ENCODE measurements at regions of chr3 and their contacts with region 1.

Region 1: DNA sequence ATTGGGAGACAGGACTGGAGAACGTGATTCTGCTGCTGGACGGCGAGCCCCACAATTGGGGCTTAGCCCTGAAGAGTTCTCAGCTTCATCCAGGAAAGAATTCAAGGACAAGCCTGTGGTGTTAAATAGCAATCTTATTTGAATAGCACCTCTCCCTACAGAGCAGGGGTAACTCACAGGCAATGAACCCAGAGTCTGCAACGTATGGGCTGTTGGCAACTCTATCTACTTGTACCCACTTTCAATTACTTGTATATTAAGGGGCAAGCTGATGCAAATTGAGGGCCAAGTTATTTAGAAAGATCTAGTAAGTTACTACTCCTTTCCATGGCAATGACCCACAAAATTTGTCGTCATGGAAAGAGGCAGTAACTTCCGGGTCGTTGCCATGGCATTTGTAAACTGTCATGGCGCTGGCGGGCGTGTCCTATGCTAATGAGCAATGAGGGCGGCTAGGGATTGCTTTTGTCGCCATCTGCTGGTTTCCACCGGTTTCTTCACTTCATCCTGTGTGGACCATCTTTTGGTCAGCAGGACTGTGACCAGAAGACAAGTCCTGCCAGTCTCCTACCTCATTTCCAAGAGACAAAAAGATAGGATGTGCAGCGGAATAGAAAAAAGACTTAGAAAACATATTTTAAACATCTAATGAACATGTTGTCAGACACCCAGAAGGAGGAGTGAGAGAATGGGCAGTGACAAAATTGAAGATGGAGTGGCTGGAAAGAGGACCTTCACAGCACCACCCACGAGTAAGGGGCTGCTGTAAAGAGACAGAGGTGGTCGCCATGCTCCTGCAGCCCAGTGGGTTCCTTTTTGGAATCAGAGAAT is 45.8 kb upstream of the SH3BP5 start:
- DNase-seq: peak; percentile 78 to 98 (median 94)
- ATAC-seq: peak; percentile 94 to 98 (median 97)
- H3K4me3 ChIP-seq: peak overlapping the region in 1 of 2 donors; percentile 7
- H3K4me3 Mint-ChIP-seq: peak overlapping the region in 1 of 3 donors; percentile 17
- H3K27ac ChIP-seq: peak overlapping the region; percentile 92
- H3K27ac Mint-ChIP-seq: peak overlapping the region; percentile 81 to 86
- H3K4me1 ChIP-seq: peaks cover 0 to 4% of the 10 kb centered on the region in 2 experiments
- H3K4me1 Mint-ChIP-seq: peaks cover 8 to 12% (median 11%) of the 10 kb centered on the region in 3 donors
- H3K27me3 ChIP-seq: no peaks in the 10 kb centered on the region
- H3K27me3 Mint-ChIP-seq: no peaks in the 10 kb centered on the region

Region 2: GRCh38 chr3:15332405-15333098 is 45.6 kb before region 1 on chr3 and contains the start of gene SH3BP5:
- CTCF ChIA-PET with region 1: interaction called, 3 to 10 read pairs
- POLR2A ChIA-PET with region 1: no interaction called
- DNase-seq: peak; percentile 30 to 86 (median 64)
- ATAC-seq: peak; percentile 93 to 95 (median 94)
- H3K4me3 ChIP-seq: peak within 1 kb of the TSS; percentile 77 to 95
- H3K4me3 Mint-ChIP-seq: peak within 1 kb of the TSS; percentile 88 to 96 (median 96)
- H3K27ac ChIP-seq: peak within 1 kb of the TSS; percentile 55
- H3K27ac Mint-ChIP-seq: peak within 1 kb of the TSS; percentile 92 to 94
- H3K4me1 ChIP-seq: peaks cover 12 to 40% of the 10 kb centered on the region in 2 experiments
- H3K4me1 Mint-ChIP-seq: peaks cover 55 to 59% (median 56%) of the 10 kb centered on the region in 3 donors
- H3K27me3 ChIP-seq: no peaks in the 10 kb centered on the region
- H3K27me3 Mint-ChIP-seq: no peaks in the 10 kb centered on the region
- total RNA-seq, gene SH3BP5: 25.0 to 66.7 (median 41.7) TPM

Region 3: GRCh38 chr3:15427182-15427880 is 49.2 kb after region 1 on chr3 and contains the starts of genes EAF1 and METTL6:
- CTCF ChIA-PET with region 1: interaction called in 1 of 2 experiments, 11 read pairs
- POLR2A ChIA-PET with region 1: no interaction called
- DNase-seq: peak; percentile 69 to 89 (median 83)
- ATAC-seq: peak; percentile 85 to 95 (median 92)
- H3K4me3 ChIP-seq: peak within 1 kb of the TSS; percentile 93 to 96
- H3K4me3 Mint-ChIP-seq: peak within 1 kb of the TSS; percentile 97 to 100 (median 97)
- H3K27ac ChIP-seq: peak within 1 kb of the TSS; percentile 65
- H3K27ac Mint-ChIP-seq: peak within 1 kb of the TSS; percentile 88 to 96
- H3K4me1 ChIP-seq: peaks cover 31 to 34% of the 10 kb centered on the region in 2 experiments
- H3K4me1 Mint-ChIP-seq: peaks cover 63 to 71% (median 68%) of the 10 kb centered on the region in 3 donors
- H3K27me3 ChIP-seq: no peaks in the 10 kb centered on the region
- H3K27me3 Mint-ChIP-seq: no peaks in the 10 kb centered on the region
- total RNA-seq, gene EAF1: 17.9 to 29.7 (median 22.8) TPM
- total RNA-seq, gene METTL6: 8.1 to 19.9 (median 14.7) TPM

Measured in T-cell (primary cell).